Right cardiac atrium (tissue), 5 donors: ENCODE measurements at regions of chrX and their contacts with region 1.

Region 1: DNA sequence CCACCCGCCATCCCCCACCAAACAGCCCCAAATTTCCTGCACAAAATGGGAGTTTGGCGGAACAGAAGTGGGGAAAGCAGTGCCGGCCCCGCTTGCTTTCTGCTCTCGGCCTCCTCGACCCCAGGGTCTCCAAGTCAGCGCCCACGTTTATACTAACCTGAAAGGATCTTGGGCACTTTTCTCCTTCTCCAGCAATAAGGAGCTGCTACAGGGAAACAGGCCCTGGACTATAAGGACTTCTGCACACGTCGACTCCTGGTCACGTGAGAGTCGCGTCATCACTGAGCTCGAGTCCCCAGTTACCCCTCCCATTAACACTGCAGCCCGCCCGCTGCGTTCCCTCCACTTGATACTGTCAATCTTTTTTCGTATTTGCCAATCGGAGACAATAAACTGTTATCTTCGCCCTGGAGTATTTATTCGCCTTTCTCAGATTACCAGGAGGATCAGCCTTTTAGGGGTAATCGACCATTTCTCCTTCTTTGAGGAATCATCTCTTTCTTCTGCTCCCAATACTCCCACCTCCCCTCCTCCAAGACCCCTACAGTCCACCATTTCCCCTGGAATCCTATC is at the start of gene TCEAL8:
- DNase-seq: peak; percentile 84 to 94 (median 89)
- ATAC-seq: peak; percentile 97 to 98
- H3K4me3 ChIP-seq: peak within 1 kb of the TSS; percentile 99
- H3K27ac ChIP-seq: peak within 1 kb of the TSS; percentile 99
- H3K4me1 ChIP-seq: no peaks in the 10 kb centered on the region
- H3K27me3 ChIP-seq: no peaks in the 10 kb centered on the region
- total RNA-seq, gene TCEAL8: 57.1 to 72.6 (median 61.4) TPM

Region 2: DNA sequence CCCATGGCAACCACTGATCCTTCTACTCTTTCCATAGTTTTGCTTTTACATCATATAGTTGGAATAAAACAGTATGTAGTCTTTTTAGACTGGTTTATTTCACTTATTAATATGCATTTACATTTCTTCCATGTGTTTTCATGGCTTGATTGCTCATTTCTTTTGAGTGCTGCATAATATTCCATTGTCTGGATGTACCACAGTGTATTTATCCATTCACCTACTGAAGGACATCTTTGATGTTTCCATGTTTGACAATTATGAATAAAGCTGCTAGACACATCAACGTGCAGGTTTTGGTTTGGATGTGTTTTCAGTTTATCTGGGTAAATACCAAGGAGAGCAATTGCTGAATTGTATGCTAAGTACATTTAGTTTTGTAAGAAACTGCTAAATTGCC is 617.4 kb before region 1 on chrX:
- intact Hi-C with region 1: no loop called
- DNase-seq: no peak
- ATAC-seq: no peak
- H3K4me3 ChIP-seq: no peak overlapping the region
- H3K27ac ChIP-seq: no peak overlapping the region
- H3K4me1 ChIP-seq: no peaks in the 10 kb centered on the region
- H3K27me3 ChIP-seq: no peaks in the 10 kb centered on the region

Region 3: DNA sequence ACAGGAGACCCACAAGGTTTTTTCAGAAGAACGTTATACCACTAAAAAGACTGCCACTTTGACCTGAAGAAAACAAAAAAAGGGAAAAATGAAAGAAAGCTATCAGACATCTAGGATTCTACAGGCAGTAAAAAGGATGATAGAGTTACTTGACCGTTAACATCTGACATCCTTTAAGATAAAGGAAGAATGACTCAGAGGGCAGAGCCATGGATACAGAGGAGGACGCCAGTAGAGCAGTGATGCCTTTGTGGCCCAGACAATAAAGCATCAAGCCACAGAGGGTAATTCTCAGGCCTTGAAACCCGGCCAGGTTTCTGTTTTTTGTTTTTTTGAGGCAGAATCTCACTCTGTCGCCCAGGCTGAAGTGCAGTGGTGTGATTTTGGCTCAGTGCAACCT is 181.6 kb before region 1 on chrX:
- intact Hi-C with region 1: no loop called
- DNase-seq: no peak
- ATAC-seq: no peak
- H3K4me3 ChIP-seq: no peak overlapping the region
- H3K27ac ChIP-seq: no peak overlapping the region
- H3K4me1 ChIP-seq: no peaks in the 10 kb centered on the region
- H3K27me3 ChIP-seq: no peaks in the 10 kb centered on the region

Region 4: GRCh38 chrX:103214870-103215424 is 40.1 kb before region 1 on chrX and contains the start of gene BEX4:
- intact Hi-C with region 1: loop called in 1 of 4 experiments (anchors 5 kb)
- DNase-seq: peak; percentile 83 to 94 (median 92)
- ATAC-seq: peak; percentile 99
- H3K4me3 ChIP-seq: peak within 1 kb of the TSS; percentile 78
- H3K27ac ChIP-seq: peak within 1 kb of the TSS; percentile 68
- H3K4me1 ChIP-seq: no peaks in the 10 kb centered on the region
- H3K27me3 ChIP-seq: no peaks in the 10 kb centered on the region
- total RNA-seq, gene BEX4: 62.9 to 94.0 (median 79.7) TPM

Region 5: GRCh38 chrX:103376118-103376978 is 121.3 kb after region 1 on chrX and contains the start of gene BEX3:
- intact Hi-C with region 1: no loop called
- DNase-seq: peak; percentile 50 to 87 (median 85)
- ATAC-seq: peak; percentile 94 to 95
- H3K4me3 ChIP-seq: peak within 1 kb of the TSS; percentile 97
- H3K27ac ChIP-seq: peak within 1 kb of the TSS; percentile 82
- H3K4me1 ChIP-seq: no peaks in the 10 kb centered on the region
- H3K27me3 ChIP-seq: no peaks in the 10 kb centered on the region
- total RNA-seq, gene BEX3: 185 to 244 (median 213) TPM